ENCODE measurements at regions of chr3 and their contacts with region 1.

Region 1: DNA sequence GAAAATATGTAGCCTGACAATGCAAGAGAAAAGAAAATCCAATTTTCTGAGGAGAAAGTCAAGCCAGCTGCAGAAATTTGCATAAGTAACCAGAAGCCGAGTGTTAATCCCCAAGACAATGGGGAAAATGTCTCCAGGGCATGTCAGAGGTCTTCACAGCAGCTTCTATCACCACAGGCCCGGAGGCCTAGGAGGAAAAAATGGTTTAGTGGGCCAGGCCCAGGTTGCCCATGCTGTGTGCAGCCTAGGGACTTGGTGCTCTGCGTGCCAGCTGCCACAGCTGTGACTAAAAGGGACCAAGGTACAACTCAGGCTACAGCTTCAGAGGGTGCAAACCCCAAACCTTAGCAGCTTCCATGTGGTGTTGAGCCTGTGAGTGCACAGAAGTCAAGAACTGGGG is 201.2 kb upstream of the SOX2 start:
- DNase-seq: no peak
- H3K4me3 ChIP-seq: no peak overlapping the region
- H3K27ac ChIP-seq: no peak overlapping the region
- H3K4me1 ChIP-seq: no peaks in the 10 kb centered on the region
- H3K27me3 ChIP-seq: no peaks in the 10 kb centered on the region
- CTCF ChIP-seq: no peak

Region 2: DNA sequence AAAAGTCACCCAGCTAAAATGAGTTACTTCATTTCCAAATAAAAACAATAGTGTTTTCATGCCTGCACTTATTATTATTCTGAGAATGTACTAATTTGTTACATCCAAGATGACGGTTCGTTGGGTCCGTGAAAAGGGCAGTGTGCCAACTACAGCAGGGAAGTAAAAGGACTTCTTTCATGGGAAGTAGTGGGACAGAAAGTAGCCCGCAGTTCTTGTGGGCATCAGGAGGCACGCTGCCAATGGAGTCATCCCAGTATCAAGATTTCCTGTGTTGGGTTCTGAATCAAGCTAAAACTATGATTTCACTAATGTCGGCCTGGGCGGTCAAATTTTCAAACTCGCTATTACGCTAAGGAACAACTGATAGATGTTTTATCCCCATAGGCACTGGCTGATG is 53.3 kb before region 1 on chr3:
- dilution Hi-C with region 1: loop called (anchors 10 kb)
- DNase-seq: no peak
- H3K4me3 ChIP-seq: no peak overlapping the region
- H3K27ac ChIP-seq: no peak overlapping the region
- H3K4me1 ChIP-seq: no peaks in the 10 kb centered on the region
- H3K27me3 ChIP-seq: no peaks in the 10 kb centered on the region
- CTCF ChIP-seq: no peak

Region 3: DNA sequence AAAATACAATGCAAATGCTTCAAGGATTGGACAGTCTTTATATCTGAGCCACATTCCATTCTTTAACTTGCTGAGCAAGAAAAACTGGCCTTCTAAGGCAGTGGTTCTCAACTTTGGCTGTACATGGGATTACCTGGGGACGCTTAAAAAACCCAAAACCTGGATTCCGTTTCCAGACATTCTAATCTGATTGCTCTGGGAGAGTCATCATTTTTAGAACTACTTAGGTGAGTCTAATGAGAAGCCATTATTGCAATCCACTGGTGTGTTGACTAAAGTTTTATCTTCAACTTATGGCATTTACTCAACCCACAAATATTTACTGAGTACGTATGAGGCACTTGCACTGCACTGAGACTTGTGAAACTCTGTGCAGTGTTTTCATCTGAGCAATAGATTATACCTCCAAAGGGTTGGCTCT is 1087.1 kb after region 1 on chr3:
- dilution Hi-C with region 1: no loop called
- DNase-seq: no peak
- H3K4me3 ChIP-seq: no peak overlapping the region
- H3K27ac ChIP-seq: no peak overlapping the region
- H3K4me1 ChIP-seq: peaks cover 8% of the 10 kb centered on the region
- H3K27me3 ChIP-seq: no peaks in the 10 kb centered on the region
- CTCF ChIP-seq: no peak

Measured in keratinocyte (primary cell).